ENCODE measurements at regions of chr12 and their contacts with region 1.

Region 1: GRCh38 chr12:84842406-84843013 is 70.1 kb downstream of the SLC6A15 start:
- DNase-seq: no peak
- ATAC-seq: no peak
- H3K4me3 Mint-ChIP-seq: no peak overlapping the region
- H3K27ac Mint-ChIP-seq: no peak overlapping the region
- H3K4me1 Mint-ChIP-seq: no peaks in the 10 kb centered on the region
- H3K27me3 Mint-ChIP-seq: no peaks in the 10 kb centered on the region
- CTCF ChIP-seq: peak; percentile 65

Region 2: DNA sequence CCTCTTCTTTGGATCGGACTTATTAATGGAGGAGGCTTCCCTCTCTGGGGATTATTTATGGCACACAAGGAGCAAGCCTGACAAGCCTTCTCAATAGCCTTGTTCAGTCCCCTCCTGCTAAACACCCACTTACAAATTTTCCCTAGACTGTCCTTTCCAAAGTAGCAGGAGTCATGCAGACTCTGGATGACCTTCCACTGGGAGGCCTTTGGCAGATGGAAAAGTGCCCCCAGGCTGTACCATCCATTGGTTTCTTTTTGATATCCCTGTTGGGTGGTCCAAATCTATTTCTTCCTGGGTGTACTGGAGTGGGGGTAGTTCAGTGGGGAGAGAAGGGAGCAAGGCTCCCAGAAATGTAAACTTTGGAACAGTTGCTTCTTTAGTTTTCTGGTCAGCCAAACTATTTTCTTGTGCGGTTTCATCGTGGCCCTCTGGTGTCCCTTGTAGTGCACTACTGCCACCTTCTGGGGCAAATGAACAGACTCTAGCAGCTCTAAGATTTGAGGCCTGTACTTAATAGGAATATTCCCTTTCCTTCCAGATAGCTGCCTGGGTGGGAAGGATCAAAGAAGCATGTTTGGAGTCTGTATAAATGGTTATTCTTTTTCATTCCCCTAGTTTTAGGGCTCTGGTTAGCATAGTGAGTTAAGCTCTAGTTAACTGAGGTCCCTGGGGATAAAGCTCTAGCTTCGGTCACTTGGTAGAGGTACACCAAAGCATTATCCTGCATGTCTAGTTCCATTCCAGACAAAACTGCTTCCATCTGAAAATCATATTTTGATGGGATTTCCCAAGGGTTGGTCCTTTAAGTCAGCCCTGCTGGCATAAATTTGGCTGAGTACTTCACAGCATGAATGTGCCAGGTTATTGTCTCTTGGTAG is 339.4 kb before region 1 on chr12:
- CTCF ChIA-PET with region 1: interaction called, 11 read pairs
- POLR2A ChIA-PET with region 1: no interaction called
- DNase-seq: peak; percentile 71
- ATAC-seq: peak; percentile 95
- H3K4me3 Mint-ChIP-seq: no peak overlapping the region
- H3K27ac Mint-ChIP-seq: no peak overlapping the region
- H3K4me1 Mint-ChIP-seq: peaks cover 4% of the 10 kb centered on the region
- H3K27me3 Mint-ChIP-seq: no peaks in the 10 kb centered on the region
- CTCF ChIP-seq: peak; percentile 57

Measured in WTC11 (cell line).